ENCODE measurements at regions of chr2 and their contacts with region 1.

Region 1: GRCh38 chr2:100984892-100985379 is 17.2 kb upstream of the RPL31 start:
- DNase-seq: peak; percentile 70 to 90
- ATAC-seq: peak; percentile 66 to 90 (median 84)
- H3K4me3 ChIP-seq: no peak overlapping the region
- H3K4me3 Mint-ChIP-seq: no peak overlapping the region
- H3K27ac ChIP-seq: no peak overlapping the region
- H3K27ac Mint-ChIP-seq: peak overlapping the region in 1 of 2 donors; percentile 79
- H3K4me1 ChIP-seq: no peaks in the 10 kb centered on the region
- H3K4me1 Mint-ChIP-seq: peaks cover 0 to 7% of the 10 kb centered on the region in 2 donors
- H3K27me3 ChIP-seq: no peaks in the 10 kb centered on the region
- H3K27me3 Mint-ChIP-seq: peaks cover 6 to 13% of the 10 kb centered on the region in 2 donors
- CTCF ChIP-seq: peak; percentile 93

Region 2: GRCh38 chr2:100262555-100263320 is 722.2 kb before region 1 on chr2:
- intact Hi-C with region 1: loop called (anchors 2 kb)
- DNase-seq: peak; percentile 48 to 66
- ATAC-seq: peak; percentile 65 to 92 (median 69)
- H3K4me3 ChIP-seq: no peak overlapping the region
- H3K4me3 Mint-ChIP-seq: no peak overlapping the region
- H3K27ac ChIP-seq: no peak overlapping the region
- H3K27ac Mint-ChIP-seq: no peak overlapping the region
- H3K4me1 ChIP-seq: no peaks in the 10 kb centered on the region
- H3K4me1 Mint-ChIP-seq: no peaks in the 10 kb centered on the region
- H3K27me3 ChIP-seq: no peaks in the 10 kb centered on the region
- H3K27me3 Mint-ChIP-seq: no peaks in the 10 kb centered on the region
- CTCF ChIP-seq: peak; percentile 98

Region 3: DNA sequence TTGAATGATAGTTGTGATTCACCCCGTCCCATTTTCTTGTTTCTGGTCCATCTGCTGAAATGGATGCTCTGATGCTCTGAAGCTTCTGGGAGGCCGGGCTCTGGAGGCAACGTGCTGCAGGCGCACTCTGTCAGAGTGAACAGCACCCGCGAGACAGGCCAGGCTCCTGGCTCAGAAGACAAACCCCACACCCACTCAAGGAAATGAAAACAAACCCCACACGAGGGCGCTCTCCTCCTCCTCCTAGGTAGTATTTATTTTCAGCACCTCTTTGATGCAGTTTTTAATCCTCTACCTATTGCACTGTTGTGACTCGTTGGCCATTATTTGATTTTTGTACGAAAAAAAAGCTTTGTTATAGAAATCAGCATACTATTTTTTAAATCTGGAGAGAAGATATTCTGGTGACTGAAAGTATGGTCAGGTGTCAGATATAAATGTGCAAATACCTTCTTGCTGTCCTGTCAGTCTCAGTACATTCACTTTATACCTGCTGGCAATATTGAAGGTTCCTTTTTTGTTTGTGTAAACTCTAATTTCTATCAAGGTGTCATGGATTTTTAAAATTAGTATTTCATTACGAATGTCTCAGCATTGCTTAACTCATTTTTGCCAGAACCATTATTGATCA is 557.2 kb before region 1 on chr2:
- intact Hi-C with region 1: loop called (anchors 1 kb)
- DNase-seq: peak; percentile 45 to 77
- ATAC-seq: peak; percentile 55 to 83 (median 64)
- H3K4me3 ChIP-seq: no peak overlapping the region
- H3K4me3 Mint-ChIP-seq: no peak overlapping the region
- H3K27ac ChIP-seq: no peak overlapping the region
- H3K27ac Mint-ChIP-seq: no peak overlapping the region
- H3K4me1 ChIP-seq: no peaks in the 10 kb centered on the region
- H3K4me1 Mint-ChIP-seq: peaks cover 5% of the 10 kb centered on the region in 2 donors
- H3K27me3 ChIP-seq: no peaks in the 10 kb centered on the region
- H3K27me3 Mint-ChIP-seq: peaks cover 36 to 64% of the 10 kb centered on the region in 2 donors
- CTCF ChIP-seq: peak; percentile 69

Region 4: DNA sequence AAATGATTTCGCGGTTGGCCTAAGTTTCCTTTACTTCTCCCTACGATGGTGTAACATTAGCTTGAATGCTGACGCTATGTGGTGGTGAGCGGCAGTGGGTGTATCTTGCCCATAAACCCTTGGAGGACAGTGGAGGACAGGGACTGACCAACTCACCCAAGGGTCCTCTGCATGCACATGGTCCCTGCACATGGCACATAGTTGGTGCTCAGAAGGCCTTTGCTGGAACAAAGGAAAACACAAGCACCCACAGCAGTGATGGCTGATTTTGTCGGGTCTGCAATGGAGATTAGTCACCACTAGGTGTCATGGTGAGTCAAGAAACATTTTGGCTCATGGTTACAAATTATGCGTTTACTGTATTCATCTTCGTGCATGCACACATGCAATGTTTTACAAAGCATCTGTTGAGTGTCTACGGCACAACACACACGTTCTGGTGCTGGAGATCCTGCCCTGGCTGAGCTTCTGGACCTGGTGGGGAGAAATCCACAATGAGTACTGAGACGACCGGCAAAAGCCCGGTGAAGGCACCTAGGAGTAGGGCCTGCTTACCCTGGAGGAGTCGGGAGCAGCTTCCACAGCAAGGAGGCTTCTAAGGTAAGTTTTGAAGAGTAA is 378.1 kb before region 1 on chr2:
- intact Hi-C with region 1: loop called (anchors 1 kb)
- DNase-seq: peak in 1 of 2 donors; percentile 72
- ATAC-seq: peak; percentile 55 to 87 (median 70)
- H3K4me3 ChIP-seq: no peak overlapping the region
- H3K4me3 Mint-ChIP-seq: no peak overlapping the region
- H3K27ac ChIP-seq: no peak overlapping the region
- H3K27ac Mint-ChIP-seq: no peak overlapping the region
- H3K4me1 ChIP-seq: no peaks in the 10 kb centered on the region
- H3K4me1 Mint-ChIP-seq: peaks cover 5 to 6% of the 10 kb centered on the region in 2 donors
- H3K27me3 ChIP-seq: no peaks in the 10 kb centered on the region
- H3K27me3 Mint-ChIP-seq: no peaks in the 10 kb centered on the region
- CTCF ChIP-seq: peak; percentile 80

Region 5: GRCh38 chr2:100767224-100767653 is 217.7 kb before region 1 on chr2:
- intact Hi-C with region 1: no loop called
- DNase-seq: no peak
- ATAC-seq: no peak
- H3K4me3 ChIP-seq: no peak overlapping the region
- H3K4me3 Mint-ChIP-seq: no peak overlapping the region
- H3K27ac ChIP-seq: no peak overlapping the region
- H3K27ac Mint-ChIP-seq: no peak overlapping the region
- H3K4me1 ChIP-seq: no peaks in the 10 kb centered on the region
- H3K4me1 Mint-ChIP-seq: no peaks in the 10 kb centered on the region
- H3K27me3 ChIP-seq: peaks cover 2% of the 10 kb centered on the region
- H3K27me3 Mint-ChIP-seq: peaks cover 26 to 48% of the 10 kb centered on the region in 2 donors
- CTCF ChIP-seq: no peak

Region 6: GRCh38 chr2:100948942-100949811 is 35.8 kb before region 1 on chr2:
- intact Hi-C with region 1: no loop called
- DNase-seq: no peak
- ATAC-seq: no peak
- H3K4me3 ChIP-seq: no peak overlapping the region
- H3K4me3 Mint-ChIP-seq: no peak overlapping the region
- H3K27ac ChIP-seq: no peak overlapping the region
- H3K27ac Mint-ChIP-seq: no peak overlapping the region
- H3K4me1 ChIP-seq: no peaks in the 10 kb centered on the region
- H3K4me1 Mint-ChIP-seq: no peaks in the 10 kb centered on the region
- H3K27me3 ChIP-seq: no peaks in the 10 kb centered on the region
- H3K27me3 Mint-ChIP-seq: peaks cover 0 to 13% of the 10 kb centered on the region in 2 donors
- CTCF ChIP-seq: no peak